Cardiac septum (tissue), 1 donor: ENCODE measurements at regions of chr19 and their contacts with region 1.

Region 1: DNA sequence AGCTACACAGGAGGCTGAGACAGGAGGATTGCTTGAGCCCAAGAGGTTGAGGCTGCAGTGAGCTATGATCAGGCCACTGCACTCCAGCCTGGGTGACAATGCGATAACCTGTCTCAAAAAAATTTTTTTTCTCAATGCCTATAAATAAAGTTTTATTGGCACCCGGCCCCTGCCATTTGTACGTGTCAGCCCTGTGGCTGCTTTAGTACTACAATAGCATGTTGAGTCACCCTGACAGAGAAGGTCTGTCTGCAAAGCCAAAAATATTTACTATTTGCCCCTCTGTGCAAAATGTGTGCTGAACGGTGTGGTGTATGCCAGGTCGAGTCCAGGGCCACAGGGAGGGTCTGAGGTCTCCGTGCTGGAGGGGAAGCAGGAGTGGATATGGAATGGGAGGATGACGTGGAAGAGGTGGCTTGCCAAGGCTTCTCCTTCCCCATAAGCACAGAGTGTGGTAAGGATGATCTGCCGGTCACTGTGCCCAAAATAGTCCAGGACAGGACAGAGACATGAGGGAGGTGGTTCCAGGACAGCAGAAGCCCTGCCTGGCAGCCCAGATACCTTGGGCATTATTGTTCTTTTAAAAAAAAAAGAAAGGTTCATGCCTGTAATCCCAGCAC is 10.0 kb downstream of the NMRK2 start:
- DNase-seq: no peak

Region 2: DNA sequence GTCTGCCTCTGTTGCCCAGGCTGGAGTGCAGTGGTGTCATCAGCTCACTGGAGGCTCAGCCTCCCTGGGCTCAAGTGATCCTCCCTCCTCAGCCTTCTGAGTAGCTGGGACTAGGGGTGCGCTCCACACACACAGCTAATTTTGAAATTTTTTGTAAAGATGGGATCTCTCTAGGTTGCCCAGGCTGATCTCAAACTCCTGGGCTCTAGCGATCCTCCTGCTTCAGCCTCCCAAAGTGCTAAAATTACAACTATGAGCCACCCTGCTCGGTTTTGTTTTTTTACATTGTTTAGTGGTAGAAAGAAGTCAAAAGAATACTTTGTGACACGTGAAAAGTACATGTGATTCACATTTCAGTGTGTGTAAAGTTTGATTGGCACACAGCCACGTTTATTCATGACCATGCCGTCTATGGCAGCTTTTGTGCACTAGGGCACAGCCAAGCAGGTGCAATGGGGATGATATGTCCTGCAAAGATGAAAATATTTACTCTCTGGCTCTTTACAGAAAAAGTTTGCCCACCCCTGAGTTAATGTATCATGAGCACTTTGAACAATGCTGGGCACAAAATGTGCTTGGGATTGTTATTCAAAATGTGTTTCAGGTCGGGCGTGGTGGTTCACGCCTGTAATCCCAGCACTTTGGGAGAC is 592.8 kb before region 1 on chr19:
- intact Hi-C with region 1: no loop called
- DNase-seq: no peak

Region 3: DNA sequence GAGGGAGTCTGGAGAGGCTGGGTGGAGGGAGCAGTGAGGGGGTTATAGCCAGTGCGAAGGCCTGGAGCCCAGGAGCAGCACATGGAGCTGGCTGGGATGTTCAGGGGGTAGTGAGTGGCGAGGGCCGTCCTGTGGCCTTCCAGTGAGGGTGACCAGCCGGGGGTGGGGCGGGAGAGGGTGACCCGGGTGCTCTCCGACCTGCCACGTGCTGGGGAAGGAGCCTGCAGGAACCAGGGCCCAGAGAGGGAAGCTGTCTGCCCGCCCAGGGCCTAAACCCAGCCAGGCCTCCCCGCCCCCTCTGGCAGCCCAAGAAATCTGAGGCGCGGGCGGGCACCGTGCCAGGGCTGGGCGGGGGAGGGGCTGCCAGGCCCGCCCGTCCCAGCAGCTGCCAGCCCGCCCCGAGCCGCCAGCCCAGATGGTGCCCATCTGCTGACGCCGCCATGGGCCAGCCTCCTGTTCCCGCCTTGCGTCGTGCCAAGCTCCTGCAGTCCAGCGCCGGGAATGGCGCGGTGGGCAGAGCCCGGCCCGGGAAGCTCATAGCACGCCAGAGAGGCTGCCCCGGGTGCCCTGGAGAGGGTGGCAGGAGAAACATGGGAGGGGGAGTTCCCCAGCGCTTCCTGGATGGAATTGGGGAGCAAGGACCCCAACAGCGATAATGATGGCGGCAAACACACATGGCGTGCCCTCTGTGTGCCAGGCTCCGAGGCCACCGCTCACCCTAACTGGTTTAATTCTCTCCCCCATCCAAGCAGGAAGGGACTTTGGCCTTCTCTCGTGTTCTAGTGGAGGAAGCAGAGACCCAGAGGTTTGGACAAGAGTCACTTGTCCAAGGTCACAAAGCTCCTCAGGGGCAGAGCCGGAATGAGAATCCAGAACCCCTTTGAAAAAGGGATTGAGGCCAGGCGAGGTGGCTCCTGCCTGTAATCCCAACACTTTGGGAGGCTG is 555.0 kb before region 1 on chr19:
- intact Hi-C with region 1: loop called (anchors 10 kb)
- DNase-seq: peak; percentile 89

Region 4: GRCh38 chr19:4054471-4055208 is 111.7 kb after region 1 on chr19:
- intact Hi-C with region 1: no loop called
- DNase-seq: no peak

Region 5: GRCh38 chr19:4065430-4066175 is 122.7 kb after region 1 on chr19:
- intact Hi-C with region 1: no loop called
- DNase-seq: peak; percentile 99